ENCODE measurements at regions of chr11 and their contacts with region 1.

Region 1: GRCh38 chr11:1882519-1883238 is 9.0 kb downstream of the PRR33 start:
- DNase-seq: peak; percentile 60
- H3K4me3 ChIP-seq: no peak overlapping the region
- H3K27ac ChIP-seq: no peak overlapping the region
- H3K4me1 ChIP-seq: no peaks in the 10 kb centered on the region
- H3K27me3 ChIP-seq: no peaks in the 10 kb centered on the region
- CTCF ChIP-seq: peak; percentile 91 to 98
- POLR2A ChIP-seq: no peak

Region 2: GRCh38 chr11:1837171-1838076 is 45.3 kb before region 1 on chr11:
- CTCF ChIA-PET with region 1: interaction called, 24 read pairs
- POLR2A ChIA-PET with region 1: no interaction called
- dilution Hi-C with region 1: no loop called
- intact Hi-C with region 1: loop called (anchors 1 kb)
- DNase-seq: peak; percentile 19
- H3K4me3 ChIP-seq: no peak overlapping the region
- H3K27ac ChIP-seq: no peak overlapping the region
- H3K4me1 ChIP-seq: no peaks in the 10 kb centered on the region
- H3K27me3 ChIP-seq: no peaks in the 10 kb centered on the region
- CTCF ChIP-seq: peak; percentile 67 to 92
- POLR2A ChIP-seq: no peak

Region 3: GRCh38 chr11:1863352-1864216 is 19.1 kb before region 1 on chr11:
- CTCF ChIA-PET with region 1: interaction called, 21 read pairs
- POLR2A ChIA-PET with region 1: no interaction called
- dilution Hi-C with region 1: no loop called
- intact Hi-C with region 1: no loop called
- DNase-seq: peak; percentile 82
- H3K4me3 ChIP-seq: no peak overlapping the region
- H3K27ac ChIP-seq: no peak overlapping the region
- H3K4me1 ChIP-seq: peaks cover 12% of the 10 kb centered on the region
- H3K27me3 ChIP-seq: no peaks in the 10 kb centered on the region
- CTCF ChIP-seq: no peak
- POLR2A ChIP-seq: no peak

Region 4: DNA sequence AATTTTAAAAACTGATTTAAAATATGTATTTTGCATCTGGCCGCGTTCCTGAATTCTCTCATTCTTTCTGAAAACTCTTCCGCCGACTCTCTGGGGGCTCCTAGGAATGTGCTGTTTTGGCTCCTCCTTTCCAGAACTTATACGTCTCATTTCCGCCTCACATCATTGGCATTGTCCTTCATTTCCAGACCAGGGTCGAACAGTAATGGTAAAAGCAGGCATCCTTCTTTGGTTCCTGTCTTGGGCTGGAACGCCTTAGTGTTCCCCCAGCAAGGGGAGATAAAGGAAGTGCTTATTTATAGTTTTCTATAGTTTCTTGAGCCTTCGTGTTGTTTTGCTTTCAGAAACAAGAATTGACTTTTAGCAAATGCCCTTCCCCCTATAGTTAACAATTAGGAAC is 25.9 kb after region 1 on chr11:
- CTCF ChIA-PET with region 1: interaction called, 41 read pairs
- POLR2A ChIA-PET with region 1: interaction called, 3 read pairs
- dilution Hi-C with region 1: no loop called
- intact Hi-C with region 1: no loop called
- DNase-seq: peak; percentile 86
- H3K4me3 ChIP-seq: peak overlapping the region in 1 of 3 experiments; percentile 22
- H3K27ac ChIP-seq: peak overlapping the region; percentile 74
- H3K4me1 ChIP-seq: peaks cover 33% of the 10 kb centered on the region
- H3K27me3 ChIP-seq: no peaks in the 10 kb centered on the region
- CTCF ChIP-seq: no peak
- POLR2A ChIP-seq: peak; percentile 21

Region 5: GRCh38 chr11:1953489-1954266 is 71.0 kb after region 1 on chr11:
- CTCF ChIA-PET with region 1: interaction called, 102 read pairs
- POLR2A ChIA-PET with region 1: no interaction called
- dilution Hi-C with region 1: no loop called
- intact Hi-C with region 1: no loop called
- DNase-seq: no peak
- H3K4me3 ChIP-seq: no peak overlapping the region
- H3K27ac ChIP-seq: no peak overlapping the region
- H3K4me1 ChIP-seq: no peaks in the 10 kb centered on the region
- H3K27me3 ChIP-seq: no peaks in the 10 kb centered on the region
- CTCF ChIP-seq: no peak
- POLR2A ChIP-seq: no peak

Region 6: GRCh38 chr11:2027708-2028107 is 145.0 kb after region 1 on chr11:
- CTCF ChIA-PET with region 1: interaction called, 18 read pairs
- POLR2A ChIA-PET with region 1: no interaction called
- dilution Hi-C with region 1: no loop called
- intact Hi-C with region 1: no loop called
- DNase-seq: no peak
- H3K4me3 ChIP-seq: no peak overlapping the region
- H3K27ac ChIP-seq: no peak overlapping the region
- H3K4me1 ChIP-seq: no peaks in the 10 kb centered on the region
- H3K27me3 ChIP-seq: no peaks in the 10 kb centered on the region
- CTCF ChIP-seq: no peak
- POLR2A ChIP-seq: no peak

Region 7: DNA sequence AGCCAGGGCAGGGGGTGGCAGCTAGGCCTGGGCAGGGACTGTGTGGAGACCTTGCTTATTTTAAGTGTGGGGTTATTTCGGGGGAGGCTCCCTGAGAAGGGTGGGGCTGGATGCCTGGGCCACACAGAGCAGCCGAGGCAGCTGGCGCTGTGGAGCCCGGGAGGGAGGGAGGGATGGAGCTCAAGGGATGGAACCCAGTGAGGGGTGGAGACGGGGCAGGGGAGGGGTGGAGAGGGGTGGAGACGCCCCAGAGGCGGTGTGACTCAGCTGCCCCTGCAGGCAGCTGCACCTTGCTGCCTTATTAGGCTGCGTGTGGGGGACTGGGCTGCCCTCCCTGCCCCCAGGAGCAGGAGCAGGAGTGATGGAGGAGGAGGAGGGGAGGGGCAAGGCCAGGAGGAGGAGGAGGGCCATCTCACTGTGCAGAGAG is 508.1 kb after region 1 on chr11:
- CTCF ChIA-PET with region 1: no interaction called
- POLR2A ChIA-PET with region 1: no interaction called
- dilution Hi-C with region 1: no loop called
- intact Hi-C with region 1: no loop called
- DNase-seq: no peak
- H3K4me3 ChIP-seq: no peak overlapping the region
- H3K27ac ChIP-seq: no peak overlapping the region
- H3K4me1 ChIP-seq: peaks cover 9% of the 10 kb centered on the region
- H3K27me3 ChIP-seq: no peaks in the 10 kb centered on the region
- CTCF ChIP-seq: no peak
- POLR2A ChIP-seq: no peak